Activated naive CD4-positive, alpha-beta T cell treated with anti-CD3 and anti-CD28 coated beads, Interleukin-2, amount 10 ng/mL, durations not matched to agents 7 days and 5 days (primary cell): ENCODE measurements at regions of chr1 and their contacts with region 1.

Region 1: DNA sequence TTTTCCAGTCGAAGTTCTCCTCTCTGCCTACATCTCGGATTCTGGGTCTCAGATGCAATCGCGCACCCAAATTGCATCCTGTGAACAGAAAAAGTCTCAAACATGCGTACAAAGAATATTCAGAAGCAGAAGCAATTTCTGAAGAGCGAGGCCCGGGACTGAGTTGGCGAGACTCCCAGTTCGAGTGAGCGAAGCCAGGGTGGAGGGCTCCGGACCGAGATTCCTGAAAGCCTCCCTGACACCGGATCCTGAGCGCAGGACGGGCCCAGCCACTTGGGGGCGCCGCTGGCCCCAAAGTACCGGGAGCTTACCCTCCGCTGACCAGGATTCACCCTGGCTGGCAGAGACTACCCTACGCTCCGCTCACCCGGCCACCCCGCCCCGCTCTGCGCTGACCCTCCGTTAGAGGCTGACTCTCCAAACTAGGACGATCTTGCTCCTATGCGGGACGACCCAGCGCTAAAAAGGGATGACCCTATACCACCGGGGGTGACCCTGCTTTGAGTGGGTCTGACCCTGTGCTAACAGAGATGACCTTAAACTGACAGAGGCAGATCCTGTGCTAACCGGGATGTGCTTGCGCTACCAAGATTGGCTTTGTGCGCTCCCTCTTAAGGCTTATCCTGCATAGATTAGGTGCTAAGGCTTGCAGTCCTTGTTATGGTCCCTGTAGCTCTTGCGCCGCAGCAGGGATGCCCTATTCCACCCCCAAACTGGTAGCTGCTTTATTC is 12.1 kb downstream of the FOXD2 start:
- DNase-seq: no peak
- H3K4me3 Mint-ChIP-seq: no peak overlapping the region
- H3K27ac Mint-ChIP-seq: no peak overlapping the region
- H3K4me1 Mint-ChIP-seq: peaks cover 4% of the 10 kb centered on the region
- H3K27me3 Mint-ChIP-seq: peaks cover 56% of the 10 kb centered on the region

Region 2: DNA sequence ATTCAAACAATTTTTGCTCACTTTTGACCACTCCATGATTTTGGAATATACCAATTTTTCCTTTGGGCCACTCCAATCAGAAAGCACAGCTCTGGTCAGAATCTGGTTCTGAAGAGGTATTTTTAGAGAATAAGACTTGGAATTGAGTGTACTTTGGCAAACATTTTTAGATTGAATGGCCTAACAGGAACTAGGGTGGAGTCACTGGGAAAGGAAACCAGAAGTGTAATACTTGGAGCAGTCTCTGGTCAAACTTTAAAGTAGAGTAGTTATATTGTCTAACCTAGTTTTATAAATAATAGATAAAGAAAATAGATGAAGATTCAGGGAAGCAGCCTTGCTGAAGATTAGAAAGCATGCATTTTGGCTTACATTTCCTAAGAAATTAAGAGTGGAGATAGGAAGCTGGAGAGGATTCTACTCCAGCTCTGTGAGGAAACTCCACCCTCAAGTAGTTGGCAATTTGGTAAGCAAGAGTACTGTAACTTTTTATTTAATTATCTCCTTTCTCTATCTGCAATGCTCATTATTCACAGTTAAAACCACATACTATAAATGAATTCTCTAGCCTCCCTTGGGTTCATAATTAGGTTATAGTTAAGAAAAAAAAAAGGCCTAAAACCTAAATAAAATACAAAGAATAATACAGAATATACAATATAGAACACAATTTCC is 151.8 kb before region 1 on chr1:
- CTCF ChIA-PET with region 1: no interaction called
- DNase-seq: no peak
- H3K4me3 Mint-ChIP-seq: no peak overlapping the region
- H3K27ac Mint-ChIP-seq: no peak overlapping the region
- H3K4me1 Mint-ChIP-seq: peaks cover 7% of the 10 kb centered on the region
- H3K27me3 Mint-ChIP-seq: no peaks in the 10 kb centered on the region

Region 3: GRCh38 chr1:47437447-47438164 is 12.4 kb before region 1 on chr1 and contains the start of gene FOXD2:
- CTCF ChIA-PET with region 1: interaction called, 23 read pairs
- DNase-seq: peak; percentile 91
- H3K4me3 Mint-ChIP-seq: peak within 1 kb of the TSS; percentile 93
- H3K27ac Mint-ChIP-seq: peak within 1 kb of the TSS; percentile 86
- H3K4me1 Mint-ChIP-seq: peaks cover 34% of the 10 kb centered on the region
- H3K27me3 Mint-ChIP-seq: peaks cover 49% of the 10 kb centered on the region

Region 4: DNA sequence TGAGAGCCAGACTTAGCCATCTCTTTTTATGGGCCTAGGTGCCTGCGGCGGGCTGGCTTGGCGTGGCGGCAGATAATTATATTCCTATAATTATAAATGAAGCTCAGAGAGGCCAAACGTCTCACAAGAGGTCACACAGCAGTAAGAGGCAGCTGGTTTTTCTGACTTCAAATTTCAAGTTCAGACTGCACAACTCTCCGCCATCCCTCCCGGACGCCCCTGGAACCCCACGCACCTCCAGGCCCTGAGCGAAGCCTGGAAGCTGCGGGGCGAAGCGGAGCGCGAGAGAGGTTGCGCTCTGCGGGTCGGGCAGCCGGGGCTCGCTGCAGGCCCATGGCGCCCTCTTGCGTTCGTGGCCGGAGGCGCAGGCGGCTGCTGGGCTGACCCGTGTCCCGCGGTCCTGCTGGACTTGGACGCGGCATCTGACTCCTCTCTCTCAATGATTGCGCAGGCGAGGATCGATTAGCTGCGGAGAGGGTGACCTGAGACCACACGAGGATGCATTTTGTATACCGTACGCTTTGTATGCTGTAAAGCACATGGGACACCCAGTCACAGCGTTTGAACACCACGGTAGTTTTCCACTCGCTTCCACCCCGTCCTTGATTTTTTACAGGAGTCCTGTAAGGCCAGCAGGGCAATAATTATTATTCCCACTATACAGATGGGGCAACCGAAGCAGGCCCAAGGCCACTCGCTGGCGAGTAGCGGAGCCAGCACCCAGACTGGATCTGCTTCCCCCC is 260.5 kb after region 1 on chr1:
- CTCF ChIA-PET with region 1: interaction called, 12 read pairs
- DNase-seq: peak; percentile 77
- H3K4me3 Mint-ChIP-seq: no peak overlapping the region
- H3K27ac Mint-ChIP-seq: no peak overlapping the region
- H3K4me1 Mint-ChIP-seq: peaks cover 8% of the 10 kb centered on the region
- H3K27me3 Mint-ChIP-seq: peaks cover 93% of the 10 kb centered on the region

Region 5: GRCh38 chr1:48203287-48203900 is 753.4 kb after region 1 on chr1:
- CTCF ChIA-PET with region 1: no interaction called
- DNase-seq: no peak
- H3K4me3 Mint-ChIP-seq: no peak overlapping the region
- H3K27ac Mint-ChIP-seq: no peak overlapping the region
- H3K4me1 Mint-ChIP-seq: no peaks in the 10 kb centered on the region
- H3K27me3 Mint-ChIP-seq: peaks cover 5% of the 10 kb centered on the region